GM12878 (cell line): ENCODE measurements at regions of chr20 and their contacts with region 1.

Region 1: GRCh38 chr20:17315407-17316231 is 88.8 kb downstream of the PCSK2 start:
- DNase-seq: no peak
- ATAC-seq: no peak
- H3K4me3 ChIP-seq: no peak overlapping the region
- H3K27ac ChIP-seq: no peak overlapping the region
- H3K4me1 ChIP-seq: no peaks in the 10 kb centered on the region
- H3K27me3 ChIP-seq: peaks cover 0 to 3% of the 10 kb centered on the region in 2 experiments; a peak in 3 of 4 replicates
- CTCF ChIP-seq: no peak
- EP300 ChIP-seq: no peak
- POLR2A ChIP-seq: no peak
- RAD21 ChIP-seq: no peak

Region 2: GRCh38 chr20:17248224-17248623 is 67.4 kb before region 1 on chr20:
- CTCF ChIA-PET with region 1: no interaction called
- POLR2A ChIA-PET with region 1: no interaction called
- RAD21 ChIA-PET with region 1: no interaction called
- SMC1A ChIA-PET with region 1: no interaction called
- in situ Hi-C with region 1: loop called (anchors 10 kb)
- intact Hi-C with region 1: no loop called
- DNase-seq: no peak
- ATAC-seq: no peak
- H3K4me3 ChIP-seq: no peak overlapping the region
- H3K27ac ChIP-seq: no peak overlapping the region
- H3K4me1 ChIP-seq: no peaks in the 10 kb centered on the region
- H3K27me3 ChIP-seq: no peaks in the 10 kb centered on the region; a peak in 1 of 4 replicates
- CTCF ChIP-seq: no peak
- EP300 ChIP-seq: no peak
- POLR2A ChIP-seq: no peak
- RAD21 ChIP-seq: no peak

Region 3: GRCh38 chr20:17273717-17274116 is 41.9 kb before region 1 on chr20:
- CTCF ChIA-PET with region 1: no interaction called
- POLR2A ChIA-PET with region 1: no interaction called
- RAD21 ChIA-PET with region 1: no interaction called
- SMC1A ChIA-PET with region 1: no interaction called
- in situ Hi-C with region 1: no loop called
- intact Hi-C with region 1: no loop called
- DNase-seq: no peak
- ATAC-seq: no peak
- H3K4me3 ChIP-seq: no peak overlapping the region
- H3K27ac ChIP-seq: no peak overlapping the region
- H3K4me1 ChIP-seq: no peaks in the 10 kb centered on the region
- H3K27me3 ChIP-seq: no peaks in the 10 kb centered on the region
- CTCF ChIP-seq: no peak
- EP300 ChIP-seq: no peak
- POLR2A ChIP-seq: no peak
- RAD21 ChIP-seq: no peak